ENCODE measurements at regions of chr17 and their contacts with region 1.

Region 1: GRCh38 chr17:17119533-17119932 is 77.3 kb downstream of the MPRIP start:
- DNase-seq: no peak
- H3K4me3 ChIP-seq: no peak overlapping the region
- H3K4me1 ChIP-seq: peaks cover 8% of the 10 kb centered on the region
- H3K27me3 ChIP-seq: no peaks in the 10 kb centered on the region

Region 2: DNA sequence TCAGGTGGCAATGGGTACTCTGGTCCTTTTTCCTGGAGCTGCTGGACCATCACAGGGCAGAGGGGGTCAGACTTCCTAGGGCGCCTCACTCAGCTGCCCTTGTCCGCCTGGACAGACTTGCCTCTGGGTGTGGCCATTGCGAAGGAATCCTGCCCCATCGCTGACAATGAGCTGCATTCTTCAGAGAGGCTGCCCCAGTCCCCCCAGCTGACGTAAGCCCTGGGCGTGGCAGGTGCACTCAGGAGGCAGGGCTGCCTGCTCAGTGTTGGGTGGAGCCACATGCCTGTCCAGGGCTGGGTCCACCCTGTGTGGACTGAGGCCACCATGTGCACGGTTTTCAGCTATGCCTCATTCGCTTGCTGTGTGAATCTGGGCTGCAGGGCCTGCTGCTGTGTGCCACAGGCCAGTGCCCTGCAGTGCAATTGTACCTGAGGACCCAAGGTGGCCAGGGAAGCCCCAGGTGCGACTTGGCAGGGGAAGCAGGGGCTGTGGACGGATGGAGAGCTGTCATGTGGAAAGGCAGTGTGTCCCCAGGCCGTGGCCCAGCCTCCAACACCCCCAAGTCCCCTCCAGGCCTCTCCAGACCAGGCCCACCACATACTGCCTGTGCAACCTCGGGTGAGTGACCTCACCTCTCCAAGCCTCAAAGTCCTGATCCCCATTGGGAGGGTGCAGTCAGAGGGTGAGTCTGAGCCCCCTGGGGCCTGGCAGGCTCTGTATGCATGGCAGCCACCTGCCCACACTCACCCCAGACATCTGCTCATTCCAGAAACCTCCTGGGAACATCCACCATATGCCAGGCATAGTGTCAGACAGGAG is 91.3 kb before region 1 on chr17:
- in situ Hi-C with region 1: no loop called
- DNase-seq: peak; percentile 70 to 95
- H3K4me3 ChIP-seq: no peak overlapping the region
- H3K4me1 ChIP-seq: peaks cover 11% of the 10 kb centered on the region
- H3K27me3 ChIP-seq: no peaks in the 10 kb centered on the region

Region 3: GRCh38 chr17:17179371-17179827 is 59.9 kb after region 1 on chr17:
- in situ Hi-C with region 1: loop called (anchors 10 kb)
- DNase-seq: no peak
- H3K4me3 ChIP-seq: no peak overlapping the region
- H3K4me1 ChIP-seq: no peaks in the 10 kb centered on the region
- H3K27me3 ChIP-seq: no peaks in the 10 kb centered on the region

Region 4: GRCh38 chr17:17322516-17323510 is 203.3 kb after region 1 on chr17:
- in situ Hi-C with region 1: no loop called
- DNase-seq: no peak
- H3K4me3 ChIP-seq: no peak overlapping the region
- H3K4me1 ChIP-seq: no peaks in the 10 kb centered on the region
- H3K27me3 ChIP-seq: no peaks in the 10 kb centered on the region

Measured in HAP-1 (cell line).